CD14-positive monocyte (primary cell): ENCODE measurements at regions of chr10 and their contacts with region 1.

Region 1: GRCh38 chr10:71899665-71900412 is 48.8 kb upstream of the PSAP start:
- DNase-seq: no peak
- H3K4me3 ChIP-seq: no peak overlapping the region
- H3K4me3 Mint-ChIP-seq: no peak overlapping the region
- H3K27ac ChIP-seq: no peak overlapping the region
- H3K27ac Mint-ChIP-seq: no peak overlapping the region
- H3K4me1 ChIP-seq: peaks cover 18 to 19% of the 10 kb centered on the region in 2 donors
- H3K4me1 Mint-ChIP-seq: peaks cover 15% of the 10 kb centered on the region
- H3K27me3 ChIP-seq: no peaks in the 10 kb centered on the region
- H3K27me3 Mint-ChIP-seq: peaks cover 0 to 6% (median 4%) of the 10 kb centered on the region in 3 donors
- CTCF ChIP-seq: no peak

Region 2: DNA sequence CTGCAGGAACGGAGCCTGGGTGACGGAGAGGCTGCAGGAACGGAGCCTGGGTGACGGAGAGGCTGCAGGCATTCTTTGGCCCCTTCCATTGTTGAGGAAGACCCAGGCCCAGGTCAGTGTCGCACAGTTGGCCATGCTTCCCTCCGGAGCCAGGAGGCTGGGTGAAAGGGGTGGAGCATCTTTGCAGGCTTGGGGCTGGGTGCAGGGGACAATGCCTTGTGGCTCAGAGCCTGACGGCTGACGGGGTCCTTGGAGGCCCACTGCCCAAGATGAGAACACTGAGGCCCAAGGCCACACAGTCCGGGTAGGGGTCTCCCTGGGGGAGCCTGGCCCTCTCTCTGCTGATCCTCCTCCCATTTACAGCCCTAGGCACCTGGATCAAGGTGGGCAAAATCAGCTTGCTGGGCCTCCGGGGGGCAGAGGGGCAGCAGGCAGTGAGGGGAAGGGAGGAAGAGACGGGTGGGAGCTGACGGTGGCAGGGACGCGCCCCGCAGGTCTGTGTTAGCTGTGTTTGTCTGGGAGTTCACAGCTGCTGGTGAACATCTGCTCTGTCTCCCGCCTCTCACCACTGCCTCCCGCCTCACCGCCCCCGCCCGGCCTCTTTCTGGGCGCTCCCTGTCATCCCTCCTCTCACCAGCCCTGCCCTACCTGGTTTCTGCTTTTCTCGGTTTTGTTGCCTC is 980.8 kb before region 1 on chr10:
- intact Hi-C with region 1: no loop called
- DNase-seq: no peak
- H3K4me3 ChIP-seq: no peak overlapping the region
- H3K4me3 Mint-ChIP-seq: no peak overlapping the region
- H3K27ac ChIP-seq: no peak overlapping the region
- H3K27ac Mint-ChIP-seq: peak overlapping the region in 1 of 7 donors; percentile 57
- H3K4me1 ChIP-seq: no peaks in the 10 kb centered on the region
- H3K4me1 Mint-ChIP-seq: no peaks in the 10 kb centered on the region
- H3K27me3 ChIP-seq: no peaks in the 10 kb centered on the region
- H3K27me3 Mint-ChIP-seq: peaks cover 4 to 8% (median 6%) of the 10 kb centered on the region in 3 donors
- CTCF ChIP-seq: no peak

Region 3: GRCh38 chr10:71850637-71851464 is 49.0 kb before region 1 on chr10 and contains the start of gene PSAP:
- intact Hi-C with region 1: loop called in 1 of 2 experiments (anchors 5 kb)
- DNase-seq: peak; percentile 98
- H3K4me3 ChIP-seq: peak within 1 kb of the TSS; percentile 88 to 99 (median 93)
- H3K4me3 Mint-ChIP-seq: peak within 1 kb of the TSS; percentile 99
- H3K27ac ChIP-seq: peak within 1 kb of the TSS; percentile 87 to 97
- H3K27ac Mint-ChIP-seq: peak within 1 kb of the TSS; percentile 96 to 100 (median 97)
- H3K4me1 ChIP-seq: peaks cover 59 to 64% of the 10 kb centered on the region in 2 donors
- H3K4me1 Mint-ChIP-seq: peaks cover 54% of the 10 kb centered on the region
- H3K27me3 ChIP-seq: no peaks in the 10 kb centered on the region
- H3K27me3 Mint-ChIP-seq: no peaks in the 10 kb centered on the region
- CTCF ChIP-seq: no peak
- polyA plus RNA-seq, gene PSAP: 3,391 to 8,673 (median 7,346) TPM